GM13976 (cell line): ENCODE measurements at regions of chr15 and their contacts with region 1.

Region 1: DNA sequence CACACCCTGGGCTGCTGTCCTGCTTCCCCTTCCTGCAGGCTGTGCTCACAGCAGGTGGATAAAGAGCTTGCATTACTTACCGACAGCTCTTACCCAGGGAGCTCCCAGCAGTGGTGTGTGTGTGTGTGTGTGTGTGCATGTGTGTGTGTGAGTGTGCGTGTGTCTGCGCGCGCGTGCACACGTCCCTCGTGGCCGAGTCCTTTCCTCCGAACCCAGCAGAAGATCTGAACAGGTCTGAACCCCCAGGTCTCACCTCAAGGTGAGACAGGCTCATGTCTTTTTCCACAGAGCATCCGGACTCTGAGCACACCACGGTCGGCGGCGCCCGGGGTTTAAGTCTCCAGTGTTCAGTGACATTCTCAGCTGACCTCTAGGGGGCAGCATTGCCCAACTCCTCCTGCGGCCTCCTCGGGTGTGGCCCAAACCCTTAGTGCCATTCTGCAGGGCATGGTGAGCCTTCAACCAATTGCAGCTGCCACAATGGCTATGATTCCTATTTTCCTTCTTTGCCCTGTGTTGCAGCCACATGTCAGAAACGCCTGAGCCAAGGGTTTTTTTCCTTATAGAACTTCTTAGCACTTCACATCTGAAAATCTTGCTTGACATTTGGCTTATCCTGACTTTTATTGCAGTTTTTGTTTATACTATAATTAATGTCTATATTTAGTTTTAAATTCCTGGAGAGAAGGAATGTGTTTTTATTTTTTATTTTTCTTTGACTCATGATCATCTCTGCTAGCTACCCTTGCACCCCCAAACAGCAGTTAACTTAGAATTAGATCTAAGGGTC is 64.1 kb upstream of the KLHL25 start:
- DNase-seq: peak; percentile 83
- CTCF ChIP-seq: peak; percentile 79

Region 2: GRCh38 chr15:85296615-85297402 is 562.0 kb before region 1 on chr15:
- in situ Hi-C with region 1: no loop called
- DNase-seq: peak; percentile 82
- CTCF ChIP-seq: peak; percentile 65

Region 3: GRCh38 chr15:85625856-85626255 is 232.9 kb before region 1 on chr15:
- in situ Hi-C with region 1: no loop called
- DNase-seq: peak; percentile 29
- CTCF ChIP-seq: no peak

Region 4: DNA sequence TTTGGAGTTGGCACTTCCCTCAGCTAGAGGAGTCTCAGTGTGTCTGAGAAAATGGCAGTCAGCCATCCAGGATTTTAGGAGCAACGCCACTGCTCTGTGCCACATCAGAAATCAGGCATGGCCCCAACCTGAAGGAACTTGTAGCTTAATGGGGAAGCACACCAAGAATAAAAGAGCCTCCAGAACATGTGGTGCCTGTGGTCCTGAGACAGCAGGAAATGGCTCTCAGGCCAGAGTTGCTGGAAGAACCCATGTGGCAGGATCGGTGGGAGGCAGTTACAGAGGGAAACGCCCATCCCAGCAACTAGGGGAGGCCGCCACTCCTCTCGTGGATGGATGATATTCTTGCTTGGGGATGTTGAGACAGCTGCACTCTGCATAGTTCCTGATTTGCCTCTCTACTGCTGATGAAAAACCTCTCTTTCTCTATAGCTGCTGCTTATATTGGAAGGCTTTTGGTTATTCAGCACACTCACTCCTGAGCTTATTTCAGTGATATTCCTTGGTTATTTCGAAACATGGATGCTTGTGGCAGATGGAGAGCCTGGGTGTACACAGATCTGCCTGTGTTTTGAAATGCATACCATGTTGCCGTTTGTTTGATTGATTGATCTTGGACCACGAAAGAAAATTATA is 116.5 kb before region 1 on chr15:
- in situ Hi-C with region 1: no loop called
- DNase-seq: no peak
- CTCF ChIP-seq: no peak

Region 5: DNA sequence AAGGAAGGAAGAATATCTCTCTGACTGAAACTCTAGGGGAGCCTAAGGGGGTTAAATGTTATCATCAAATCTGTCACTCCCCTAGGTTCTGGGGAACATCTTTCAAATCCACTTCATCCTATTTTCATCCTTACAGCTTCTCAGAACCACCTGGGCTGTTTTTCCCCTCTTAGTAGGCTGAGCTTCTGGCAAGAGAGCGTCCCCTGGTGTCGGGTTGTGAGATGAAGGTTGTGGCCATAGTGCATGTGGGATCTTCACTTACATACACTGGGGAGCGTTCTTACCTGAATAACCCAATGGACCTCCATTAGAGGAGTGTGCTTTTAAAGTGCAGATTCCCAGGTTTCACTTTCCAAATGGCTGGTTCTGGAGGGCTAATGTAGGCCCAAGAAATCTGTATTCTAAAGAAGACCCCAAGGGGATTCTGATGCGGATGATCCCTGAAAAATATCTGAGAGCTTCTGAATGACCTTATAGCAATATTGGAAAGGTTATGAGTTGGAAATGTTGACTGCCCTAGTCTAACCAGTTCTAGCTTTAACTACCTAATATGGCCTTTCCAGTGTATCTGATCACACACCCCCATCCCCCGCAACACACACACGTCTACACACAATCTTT is 884.6 kb after region 1 on chr15:
- in situ Hi-C with region 1: loop called (anchors 25 kb)
- DNase-seq: no peak
- CTCF ChIP-seq: peak; percentile 33

Region 6: GRCh38 chr15:87597346-87598052 is 1738.7 kb after region 1 on chr15:
- in situ Hi-C with region 1: loop called (anchors 25 kb)
- DNase-seq: no peak
- CTCF ChIP-seq: no peak